CD8-positive, alpha-beta T cell (primary cell): ENCODE measurements at regions of chr2 and their contacts with region 1.

Region 1: GRCh38 chr2:101341901-101342624 is 33.6 kb upstream of the RNF149 start:
- DNase-seq: peak; percentile 36 to 85 (median 71)
- ATAC-seq: peak; percentile 52
- H3K4me3 ChIP-seq: no peak overlapping the region
- H3K4me3 Mint-ChIP-seq: no peak overlapping the region
- H3K27ac ChIP-seq: no peak overlapping the region
- H3K27ac Mint-ChIP-seq: no peak overlapping the region
- H3K4me1 ChIP-seq: peaks cover 15% of the 10 kb centered on the region
- H3K4me1 Mint-ChIP-seq: peaks cover 24% of the 10 kb centered on the region
- H3K27me3 ChIP-seq: no peaks in the 10 kb centered on the region
- H3K27me3 Mint-ChIP-seq: no peaks in the 10 kb centered on the region
- CTCF ChIP-seq: peak; percentile 76

Region 2: DNA sequence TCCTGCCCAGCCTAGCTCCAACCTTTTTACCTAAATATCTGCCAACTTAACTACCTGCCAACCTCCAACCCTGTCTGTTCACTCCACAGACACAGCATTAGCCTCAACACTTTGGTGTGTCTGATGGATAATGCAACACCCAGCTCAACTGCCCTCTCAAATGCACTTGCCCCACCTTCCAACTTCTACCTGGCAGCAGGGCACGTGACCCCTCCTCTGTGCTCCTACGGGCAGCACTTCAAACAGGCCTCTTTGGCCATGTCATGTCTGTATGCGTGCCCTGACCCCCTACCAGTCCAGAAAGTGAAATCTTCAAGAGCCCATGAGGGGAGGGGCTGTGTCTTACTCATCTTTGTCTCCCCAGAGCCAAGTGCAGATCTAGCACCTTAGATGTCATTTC is 59.1 kb before region 1 on chr2:
- CTCF ChIA-PET with region 1: interaction called, 19 read pairs
- POLR2A ChIA-PET with region 1: no interaction called
- intact Hi-C with region 1: no loop called
- DNase-seq: no peak
- ATAC-seq: no peak
- H3K4me3 ChIP-seq: no peak overlapping the region
- H3K4me3 Mint-ChIP-seq: no peak overlapping the region
- H3K27ac ChIP-seq: peak overlapping the region in 1 of 2 experiments; percentile 1
- H3K27ac Mint-ChIP-seq: peak overlapping the region; percentile 67
- H3K4me1 ChIP-seq: no peaks in the 10 kb centered on the region
- H3K4me1 Mint-ChIP-seq: peaks cover 36% of the 10 kb centered on the region
- H3K27me3 ChIP-seq: no peaks in the 10 kb centered on the region
- H3K27me3 Mint-ChIP-seq: no peaks in the 10 kb centered on the region
- CTCF ChIP-seq: no peak

Region 3: DNA sequence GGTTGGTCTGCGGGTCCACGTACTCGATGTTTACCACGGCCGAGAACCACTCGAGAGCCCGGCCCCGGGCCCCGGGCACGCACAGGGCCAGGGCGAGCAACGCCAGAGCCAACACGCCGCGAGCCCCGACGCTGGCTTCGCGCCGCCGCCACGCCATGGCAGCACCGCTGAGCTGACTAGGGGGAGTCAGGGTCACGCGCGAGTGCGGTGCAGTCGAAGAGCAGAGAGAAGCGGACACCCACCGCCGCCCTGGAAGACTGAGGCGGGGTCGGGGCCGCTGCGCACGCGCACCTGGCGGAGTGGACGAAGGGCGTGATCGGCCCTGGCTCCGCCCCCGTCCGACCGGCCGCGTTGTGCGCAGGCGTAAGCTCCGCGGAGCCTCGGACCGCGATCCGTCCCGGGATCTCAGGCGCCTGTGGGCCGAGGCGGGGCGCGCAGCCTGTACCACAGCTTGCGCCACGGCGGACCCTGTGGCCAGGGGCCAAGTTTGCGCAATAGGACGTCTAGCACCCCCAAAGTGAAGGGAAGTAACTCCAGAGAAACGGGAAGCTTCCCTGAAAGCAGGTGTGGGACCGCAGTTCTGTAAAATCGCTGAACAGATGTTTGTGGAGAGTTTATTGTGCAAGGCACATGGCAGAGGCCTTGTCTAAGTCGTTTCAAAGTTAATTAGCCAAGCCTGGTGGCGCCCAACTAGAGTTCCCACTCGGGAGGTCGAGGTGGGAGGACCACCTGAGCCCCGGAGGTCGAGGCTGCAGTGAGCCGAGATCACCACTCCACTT is 33.4 kb before region 1 on chr2 and contains the start of gene RNF149:
- CTCF ChIA-PET with region 1: interaction called, 17 read pairs
- POLR2A ChIA-PET with region 1: interaction called, 5 read pairs
- intact Hi-C with region 1: loop called (anchors 2 kb)
- DNase-seq: peak; percentile 80 to 97 (median 93)
- ATAC-seq: peak; percentile 64
- H3K4me3 ChIP-seq: peak within 1 kb of the TSS; percentile 75 to 88
- H3K4me3 Mint-ChIP-seq: peak within 1 kb of the TSS; percentile 92
- H3K27ac ChIP-seq: peak within 1 kb of the TSS; percentile 81 to 90
- H3K27ac Mint-ChIP-seq: peak within 1 kb of the TSS; percentile 99
- H3K4me1 ChIP-seq: peaks cover 72% of the 10 kb centered on the region
- H3K4me1 Mint-ChIP-seq: peaks cover 78% of the 10 kb centered on the region
- H3K27me3 ChIP-seq: no peaks in the 10 kb centered on the region
- H3K27me3 Mint-ChIP-seq: no peaks in the 10 kb centered on the region
- CTCF ChIP-seq: no peak
- total RNA-seq, gene RNF149: 128 to 129 TPM

Region 4: DNA sequence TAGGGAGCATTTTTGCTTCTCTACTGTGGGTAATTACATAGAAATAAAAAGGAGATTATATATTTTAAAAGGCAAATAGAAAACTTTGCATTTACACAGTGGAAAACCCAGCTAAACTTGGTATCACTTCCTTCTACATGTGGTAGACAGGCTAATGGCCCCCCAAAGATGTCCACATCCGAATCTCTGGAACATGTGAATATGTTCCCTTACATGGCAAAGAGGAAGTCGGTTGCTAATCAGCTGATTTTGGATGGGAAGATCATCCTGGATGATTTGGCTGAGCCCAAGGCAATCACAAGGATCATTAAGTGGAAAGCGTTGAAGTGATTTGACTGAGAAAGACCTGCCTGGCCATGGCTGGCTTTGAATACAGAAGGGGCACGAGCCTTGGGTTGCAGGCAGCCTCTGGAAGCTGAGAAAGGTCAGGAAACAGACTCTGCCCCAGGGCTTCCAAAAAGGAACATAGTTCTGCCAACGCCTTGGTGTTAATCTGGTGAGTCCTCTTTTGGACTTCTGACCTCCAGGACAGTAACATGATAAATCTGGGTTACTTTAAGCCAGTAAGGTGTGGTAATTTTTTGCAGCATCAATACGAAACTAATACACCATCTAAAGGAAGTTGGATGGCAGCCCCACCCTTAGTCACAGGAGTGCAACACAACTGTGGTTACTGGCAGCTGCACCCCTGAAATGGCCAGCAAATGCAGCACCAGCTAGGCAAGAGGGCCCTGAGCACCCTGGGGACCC is 19.2 kb after region 1 on chr2:
- CTCF ChIA-PET with region 1: interaction called, 45 read pairs
- POLR2A ChIA-PET with region 1: interaction called, 4 read pairs
- intact Hi-C with region 1: no loop called
- DNase-seq: peak in 4 of 9 experiments; percentile 20 to 60 (median 36)
- ATAC-seq: peak; percentile 54
- H3K4me3 ChIP-seq: no peak overlapping the region
- H3K4me3 Mint-ChIP-seq: peak overlapping the region; percentile 16
- H3K27ac ChIP-seq: peak overlapping the region in 1 of 2 experiments; percentile 56
- H3K27ac Mint-ChIP-seq: no peak overlapping the region
- H3K4me1 ChIP-seq: peaks cover 17% of the 10 kb centered on the region
- H3K4me1 Mint-ChIP-seq: peaks cover 24% of the 10 kb centered on the region
- H3K27me3 ChIP-seq: no peaks in the 10 kb centered on the region
- H3K27me3 Mint-ChIP-seq: no peaks in the 10 kb centered on the region
- CTCF ChIP-seq: no peak

Region 5: DNA sequence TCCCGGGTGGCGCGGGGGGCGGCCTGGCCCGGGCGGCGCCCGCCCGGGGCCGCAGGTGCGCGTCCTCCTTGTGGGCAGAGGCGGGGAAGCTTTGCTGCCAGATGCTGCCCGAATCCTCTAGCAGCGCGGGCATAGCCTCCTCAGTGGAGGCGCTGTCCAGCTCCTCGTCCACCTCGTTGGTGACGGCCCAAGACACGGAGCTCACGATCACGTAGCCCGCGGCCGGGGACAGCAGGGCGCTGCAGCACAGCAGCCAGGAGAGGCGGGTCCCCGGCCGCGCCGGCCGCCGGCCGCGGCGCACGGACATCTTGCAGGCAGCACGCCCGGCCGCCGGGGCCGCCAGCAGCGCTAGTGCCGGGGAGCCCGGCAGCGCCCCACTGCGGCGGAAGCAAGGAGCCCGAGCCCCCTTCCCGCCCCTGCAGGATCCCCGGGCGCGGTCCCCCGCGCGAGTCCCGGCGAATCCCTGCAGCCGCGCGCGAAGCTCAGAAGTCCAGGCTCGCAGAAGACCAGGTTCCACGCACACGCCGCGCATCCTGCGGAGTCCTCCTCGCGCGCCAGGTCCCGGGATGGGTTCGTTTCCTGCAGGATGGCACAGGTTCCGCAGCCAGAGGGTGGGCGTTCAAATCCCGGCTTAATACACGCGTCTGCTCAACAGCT is 45.2 kb after region 1 on chr2 and contains the start of gene CREG2:
- CTCF ChIA-PET with region 1: interaction called, 42 read pairs
- POLR2A ChIA-PET with region 1: interaction called, 3 read pairs
- intact Hi-C with region 1: loop called (anchors 1 to 2 kb)
- DNase-seq: peak; percentile 20 to 73 (median 50)
- ATAC-seq: peak; percentile 90
- H3K4me3 ChIP-seq: peak within 1 kb of the TSS; percentile 33 to 37
- H3K4me3 Mint-ChIP-seq: peak within 1 kb of the TSS; percentile 73
- H3K27ac ChIP-seq: no peak within 1 kb of the TSS
- H3K27ac Mint-ChIP-seq: no peak within 1 kb of the TSS
- H3K4me1 ChIP-seq: peaks cover 4% of the 10 kb centered on the region
- H3K4me1 Mint-ChIP-seq: peaks cover 14% of the 10 kb centered on the region
- H3K27me3 ChIP-seq: peaks cover 9 to 13% of the 10 kb centered on the region in 2 experiments
- H3K27me3 Mint-ChIP-seq: peaks cover 47% of the 10 kb centered on the region
- CTCF ChIP-seq: peak; percentile 61
- total RNA-seq, gene CREG2: not detected

Region 6: DNA sequence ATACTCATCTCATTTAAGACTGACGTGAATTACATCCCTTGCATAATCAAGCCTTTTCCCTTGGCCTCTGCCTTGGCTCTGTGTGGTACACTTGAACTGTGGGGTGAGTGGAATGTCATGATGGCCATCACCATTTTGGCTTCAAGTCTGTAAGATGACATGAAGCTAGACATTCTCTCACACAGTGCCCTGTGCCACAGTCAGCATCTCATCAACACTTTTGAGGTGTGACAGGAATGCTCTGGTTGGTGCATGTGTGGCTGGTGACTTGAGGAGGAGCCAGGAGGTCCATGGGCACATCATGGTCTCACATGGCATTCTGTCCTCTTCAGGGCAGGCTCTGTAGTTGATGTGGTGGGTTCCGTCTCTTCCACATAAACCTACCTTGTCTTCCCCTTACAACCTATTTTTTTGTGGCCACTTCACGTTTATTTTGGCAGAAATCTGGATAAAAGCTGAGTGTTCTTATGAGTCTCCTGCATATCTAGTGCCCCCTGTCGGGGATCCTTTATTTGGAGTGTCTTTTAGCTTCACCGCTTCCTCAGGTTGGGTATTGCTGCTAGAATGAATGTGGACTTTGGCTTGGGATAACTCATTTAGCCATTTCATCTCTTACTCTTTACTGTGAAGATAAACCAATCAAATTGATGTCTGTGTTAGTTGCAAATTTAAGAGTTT is 383.6 kb after region 1 on chr2:
- CTCF ChIA-PET with region 1: interaction called, 3 read pairs
- POLR2A ChIA-PET with region 1: no interaction called
- intact Hi-C with region 1: loop called in 1 of 2 experiments (anchors 10 kb)
- DNase-seq: peak in 2 of 9 experiments; percentile 48 to 62
- ATAC-seq: peak; percentile 28
- H3K4me3 ChIP-seq: no peak overlapping the region
- H3K4me3 Mint-ChIP-seq: no peak overlapping the region
- H3K27ac ChIP-seq: no peak overlapping the region
- H3K27ac Mint-ChIP-seq: peak overlapping the region; percentile 38
- H3K4me1 ChIP-seq: peaks cover 88% of the 10 kb centered on the region
- H3K4me1 Mint-ChIP-seq: peaks cover 92% of the 10 kb centered on the region
- H3K27me3 ChIP-seq: no peaks in the 10 kb centered on the region
- H3K27me3 Mint-ChIP-seq: no peaks in the 10 kb centered on the region
- CTCF ChIP-seq: peak; percentile 39

Region 7: DNA sequence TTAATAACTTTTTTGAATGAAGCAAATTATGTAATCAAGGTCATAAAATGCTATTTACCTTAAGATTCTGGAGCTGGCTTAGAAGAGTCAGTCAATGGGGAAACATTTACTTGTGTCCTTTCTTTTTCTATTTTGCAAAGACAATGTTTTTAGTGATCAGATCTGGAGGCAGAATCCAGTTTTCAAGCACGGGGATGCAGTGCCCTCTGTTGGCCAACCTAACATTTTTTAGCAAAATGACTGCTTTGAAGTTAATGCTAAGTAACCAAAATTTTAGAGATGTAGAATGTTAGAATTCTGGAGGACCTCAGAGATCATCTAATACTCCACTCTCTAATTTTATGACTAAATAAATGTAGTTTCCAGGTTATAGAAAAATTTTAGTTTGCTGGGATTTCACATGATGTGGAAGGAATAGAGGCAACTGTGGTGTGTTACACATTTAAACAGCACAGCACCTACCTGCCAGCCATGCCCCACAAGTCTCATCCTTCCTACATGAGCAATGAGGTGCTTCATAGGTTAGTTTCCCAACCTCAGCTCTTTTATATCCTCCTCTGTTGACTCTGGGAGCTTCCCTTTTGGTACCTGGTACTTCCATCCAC is 1107.4 kb after region 1 on chr2:
- CTCF ChIA-PET with region 1: no interaction called
- POLR2A ChIA-PET with region 1: no interaction called
- intact Hi-C with region 1: loop called (anchors 5 to 10 kb)
- DNase-seq: peak; percentile 36 to 74 (median 61)
- ATAC-seq: no peak
- H3K4me3 ChIP-seq: no peak overlapping the region
- H3K4me3 Mint-ChIP-seq: no peak overlapping the region
- H3K27ac ChIP-seq: no peak overlapping the region
- H3K27ac Mint-ChIP-seq: no peak overlapping the region
- H3K4me1 ChIP-seq: no peaks in the 10 kb centered on the region
- H3K4me1 Mint-ChIP-seq: peaks cover 3% of the 10 kb centered on the region
- H3K27me3 ChIP-seq: no peaks in the 10 kb centered on the region
- H3K27me3 Mint-ChIP-seq: no peaks in the 10 kb centered on the region
- CTCF ChIP-seq: peak; percentile 71